GM12878 (cell line): ENCODE measurements at regions of chr11 and their contacts with region 1.

Region 1: DNA sequence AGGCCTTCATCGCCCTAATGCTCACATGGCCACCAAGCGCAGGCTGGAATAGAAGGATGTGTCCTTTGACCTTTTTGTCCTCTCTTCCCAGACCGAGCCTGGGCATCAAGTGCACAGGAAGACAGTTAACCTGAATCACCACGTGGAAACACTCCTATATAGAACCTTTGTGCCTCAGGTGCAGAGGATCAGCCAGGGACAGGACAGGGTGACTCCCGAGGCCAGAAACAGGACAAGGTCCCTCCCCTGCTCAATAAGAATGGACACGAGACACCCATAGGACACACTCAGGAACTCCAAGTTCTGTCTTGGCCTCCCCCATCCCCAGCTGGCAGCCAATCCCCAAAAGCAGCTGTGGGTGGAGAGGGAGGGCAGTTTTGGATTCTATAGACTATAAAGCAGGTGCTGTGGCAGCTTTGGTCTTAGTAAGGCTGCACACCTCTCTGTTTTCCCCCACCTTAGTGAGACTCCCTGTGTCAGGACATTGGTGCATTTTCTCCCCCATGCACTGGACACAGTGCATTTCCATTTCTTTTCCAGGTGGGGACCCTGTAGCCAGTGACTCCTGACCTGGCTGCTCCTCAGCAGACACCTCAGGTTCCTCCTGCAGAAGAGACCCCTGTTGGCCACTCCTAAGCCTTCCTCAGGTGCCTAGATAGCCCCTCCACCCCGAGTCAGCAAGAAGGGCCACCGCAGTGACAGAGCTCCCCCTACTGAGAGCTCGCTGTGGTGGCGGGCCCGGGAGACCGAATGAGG is 43.6 kb upstream of the POU2AF1 start:
- DNase-seq: no peak
- ATAC-seq: peak; percentile 93
- H3K4me3 ChIP-seq: no peak overlapping the region
- H3K27ac ChIP-seq: no peak overlapping the region
- H3K4me1 ChIP-seq: peaks cover 39% of the 10 kb centered on the region
- H3K27me3 ChIP-seq: no peaks in the 10 kb centered on the region
- CTCF ChIP-seq: peak; percentile 85 to 98 (median 94)
- EP300 ChIP-seq: no peak
- POLR2A ChIP-seq: no peak
- RAD21 ChIP-seq: peak; percentile 100

Region 2: DNA sequence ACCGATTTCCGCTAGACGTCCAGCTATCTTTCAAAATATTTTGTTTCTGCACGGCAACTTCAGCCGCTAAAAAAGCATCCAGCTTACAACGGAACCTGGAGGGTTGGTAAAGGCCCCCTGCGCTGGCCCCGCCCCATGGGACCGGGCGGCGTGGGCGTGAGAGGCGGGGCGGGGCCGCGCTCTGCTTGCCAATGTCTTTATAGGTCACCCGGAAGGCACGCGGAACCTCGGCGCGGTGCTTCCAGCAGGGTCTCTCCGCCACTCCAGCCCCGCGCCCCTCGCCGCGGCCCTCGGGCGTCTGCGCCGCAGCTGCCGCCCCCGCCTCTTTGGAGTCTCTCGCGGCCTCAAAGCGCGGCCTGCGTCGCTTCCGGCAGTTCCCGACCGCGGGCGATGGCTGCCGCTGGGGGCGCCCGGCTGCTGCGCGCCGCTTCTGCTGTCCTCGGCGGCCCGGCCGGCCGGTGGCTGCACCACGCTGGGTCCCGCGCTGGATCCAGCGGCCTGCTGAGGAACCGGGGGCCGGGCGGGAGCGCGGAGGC is 992.9 kb before region 1 on chr11 and contains the start of gene FDX1:
- CTCF ChIA-PET with region 1: no interaction called
- POLR2A ChIA-PET with region 1: no interaction called
- RAD21 ChIA-PET with region 1: no interaction called
- SMC1A ChIA-PET with region 1: interaction called, 4 read pairs
- in situ Hi-C with region 1: no loop called
- intact Hi-C with region 1: loop called (anchors 10 kb)
- DNase-seq: peak; percentile 23
- ATAC-seq: peak; percentile 92
- H3K4me3 ChIP-seq: peak within 1 kb of the TSS; percentile 67
- H3K27ac ChIP-seq: peak within 1 kb of the TSS; percentile 47
- H3K4me1 ChIP-seq: peaks cover 10% of the 10 kb centered on the region
- H3K27me3 ChIP-seq: no peaks in the 10 kb centered on the region
- CTCF ChIP-seq: peak; percentile 41 to 61 (median 42); a peak in 5 of 6 replicates
- EP300 ChIP-seq: no peak
- POLR2A ChIP-seq: peak; percentile 78
- RAD21 ChIP-seq: no peak
- polyA plus RNA-seq, gene FDX1: 3.9 to 9.6 TPM

Region 3: DNA sequence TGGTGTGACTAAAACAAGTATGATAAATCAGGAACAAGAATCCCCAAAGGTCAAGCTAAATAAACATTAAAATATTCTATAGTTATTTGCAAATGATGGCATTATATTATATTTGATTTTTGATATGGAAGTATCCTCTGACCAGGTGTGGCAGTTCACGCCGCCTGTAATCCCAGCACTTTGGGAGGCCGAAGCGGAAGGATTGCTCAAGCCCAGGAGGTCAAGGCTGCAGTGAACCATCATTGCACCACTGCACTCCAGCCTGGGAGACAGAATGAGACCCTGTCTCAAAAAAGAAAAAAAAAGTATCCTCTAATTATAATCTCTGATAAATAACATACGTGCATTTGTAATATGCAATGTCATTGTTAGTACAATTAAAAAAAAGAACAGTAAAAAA is 130.9 kb before region 1 on chr11:
- CTCF ChIA-PET with region 1: interaction called, 680 read pairs
- POLR2A ChIA-PET with region 1: no interaction called
- RAD21 ChIA-PET with region 1: interaction called, 13 read pairs
- SMC1A ChIA-PET with region 1: interaction called, 455 read pairs
- in situ Hi-C with region 1: no loop called
- intact Hi-C with region 1: no loop called
- DNase-seq: no peak
- ATAC-seq: no peak
- H3K4me3 ChIP-seq: no peak overlapping the region
- H3K27ac ChIP-seq: no peak overlapping the region
- H3K4me1 ChIP-seq: no peaks in the 10 kb centered on the region
- H3K27me3 ChIP-seq: no peaks in the 10 kb centered on the region
- CTCF ChIP-seq: no peak
- EP300 ChIP-seq: no peak
- POLR2A ChIP-seq: no peak
- RAD21 ChIP-seq: no peak

Region 4: GRCh38 chr11:111347723-111348115 is 75.0 kb before region 1 on chr11:
- CTCF ChIA-PET with region 1: interaction called, 10 read pairs
- POLR2A ChIA-PET with region 1: interaction called, 3 read pairs
- RAD21 ChIA-PET with region 1: interaction called, 20 read pairs
- SMC1A ChIA-PET with region 1: interaction called, 972 read pairs
- in situ Hi-C with region 1: no loop called
- intact Hi-C with region 1: no loop called
- DNase-seq: no peak
- ATAC-seq: no peak
- H3K4me3 ChIP-seq: no peak overlapping the region
- H3K27ac ChIP-seq: no peak overlapping the region
- H3K4me1 ChIP-seq: peaks cover 5% of the 10 kb centered on the region; the same call in 1 of the 2 replicates
- H3K27me3 ChIP-seq: no peaks in the 10 kb centered on the region
- CTCF ChIP-seq: no peak
- EP300 ChIP-seq: no peak
- POLR2A ChIP-seq: 0 out of 2 replicates have a peak, but pooled peaks have one; percentile 25
- RAD21 ChIP-seq: no peak

Region 5: DNA sequence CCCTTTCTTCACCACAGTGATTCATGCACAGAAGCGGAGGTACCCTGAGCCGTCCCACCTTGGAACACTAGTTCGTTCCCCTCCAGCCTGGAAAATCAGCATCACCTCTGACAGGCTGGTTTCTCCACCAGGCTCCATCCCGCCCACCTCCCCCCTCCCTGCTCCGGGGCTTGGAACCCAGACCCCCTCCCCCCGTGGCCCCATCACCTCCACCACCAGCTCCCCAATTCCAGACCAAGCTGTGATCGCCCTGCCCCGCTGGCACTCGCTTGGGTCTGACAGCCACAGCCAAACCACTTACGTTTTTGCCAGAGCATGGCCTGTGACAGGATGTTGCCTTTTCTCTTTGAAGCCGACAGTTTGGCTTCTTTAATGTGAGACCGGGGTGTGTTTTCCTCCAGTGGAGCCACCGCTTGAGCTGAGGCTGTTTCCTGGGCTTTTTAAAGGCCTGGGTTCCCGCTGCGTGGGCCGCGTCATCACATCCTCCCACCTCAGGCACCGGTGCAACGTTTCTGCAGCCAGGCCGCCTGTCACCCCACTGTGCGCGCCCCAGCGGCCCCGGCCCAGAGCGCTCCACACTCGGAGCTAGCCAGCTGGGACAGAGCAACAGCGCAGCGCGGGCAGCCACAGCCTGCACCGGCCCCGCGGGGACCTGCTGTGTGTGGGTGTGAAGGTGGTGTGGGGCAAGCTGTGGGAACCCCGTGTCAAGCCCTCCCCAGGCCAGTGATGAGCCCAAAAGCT is 43.6 kb before region 1 on chr11 and contains the start of gene POU2AF1:
- CTCF ChIA-PET with region 1: interaction called, 181 read pairs
- POLR2A ChIA-PET with region 1: interaction called, 415 read pairs
- RAD21 ChIA-PET with region 1: interaction called, 657 read pairs
- SMC1A ChIA-PET with region 1: interaction called, 972 read pairs
- in situ Hi-C with region 1: no loop called
- intact Hi-C with region 1: loop called (anchors 1 kb)
- DNase-seq: peak; percentile 82
- ATAC-seq: peak; percentile 76
- H3K4me3 ChIP-seq: peak within 1 kb of the TSS; percentile 69
- H3K27ac ChIP-seq: peak within 1 kb of the TSS; percentile 97
- H3K4me1 ChIP-seq: peaks cover 17% of the 10 kb centered on the region
- H3K27me3 ChIP-seq: no peaks in the 10 kb centered on the region
- CTCF ChIP-seq: no peak
- EP300 ChIP-seq: no peak; a peak in 1 of 4 replicates
- POLR2A ChIP-seq: peak; percentile 96
- RAD21 ChIP-seq: no peak
- polyA plus RNA-seq, gene POU2AF1: 13.1 to 92.7 TPM

Region 6: DNA sequence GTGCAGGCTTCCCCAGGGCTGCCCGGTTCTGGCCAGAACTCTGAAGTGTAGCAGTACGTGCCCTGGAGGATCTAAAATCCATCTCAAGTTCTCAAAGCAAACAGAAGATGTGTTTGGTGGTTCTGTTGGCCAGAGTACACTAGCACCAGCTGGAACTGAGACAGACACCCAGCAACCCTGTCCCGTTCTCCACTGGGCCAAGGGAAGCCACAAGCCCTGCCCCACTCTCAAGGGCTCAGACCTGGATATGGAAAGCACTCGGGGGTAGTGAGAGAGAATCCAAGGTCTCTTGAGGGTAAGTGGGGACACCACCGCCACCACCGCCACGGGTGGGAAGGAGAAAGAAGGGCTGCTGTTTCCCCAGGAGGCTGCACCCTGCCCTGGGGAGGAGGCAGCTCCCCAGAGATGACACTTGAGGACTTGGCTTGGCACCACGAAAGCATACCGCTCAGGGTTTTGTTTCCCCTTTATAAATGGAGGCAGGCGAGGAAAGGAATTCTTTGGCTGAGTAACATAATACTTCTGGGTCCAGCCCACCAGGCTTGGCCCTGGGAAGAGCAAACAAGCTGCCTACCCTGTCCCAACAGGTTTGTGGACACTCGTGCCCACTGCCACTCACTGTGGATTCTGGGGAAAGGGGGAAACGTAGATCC is 12.5 kb after region 1 on chr11:
- CTCF ChIA-PET with region 1: interaction called, 143 read pairs
- POLR2A ChIA-PET with region 1: interaction called, 13 read pairs
- RAD21 ChIA-PET with region 1: interaction called, 66 read pairs
- SMC1A ChIA-PET with region 1: interaction called, 67 read pairs
- in situ Hi-C with region 1: no loop called
- intact Hi-C with region 1: no loop called
- DNase-seq: no peak
- ATAC-seq: no peak
- H3K4me3 ChIP-seq: no peak overlapping the region
- H3K27ac ChIP-seq: no peak overlapping the region
- H3K4me1 ChIP-seq: no peaks in the 10 kb centered on the region; the same call in 1 of the 2 replicates
- H3K27me3 ChIP-seq: no peaks in the 10 kb centered on the region; a peak in 1 of 4 replicates
- CTCF ChIP-seq: no peak
- EP300 ChIP-seq: no peak
- POLR2A ChIP-seq: no peak
- RAD21 ChIP-seq: no peak